Transverse colon (tissue), 4 donors: ENCODE measurements at regions of chr16 and their contacts with region 1.

Region 1: DNA sequence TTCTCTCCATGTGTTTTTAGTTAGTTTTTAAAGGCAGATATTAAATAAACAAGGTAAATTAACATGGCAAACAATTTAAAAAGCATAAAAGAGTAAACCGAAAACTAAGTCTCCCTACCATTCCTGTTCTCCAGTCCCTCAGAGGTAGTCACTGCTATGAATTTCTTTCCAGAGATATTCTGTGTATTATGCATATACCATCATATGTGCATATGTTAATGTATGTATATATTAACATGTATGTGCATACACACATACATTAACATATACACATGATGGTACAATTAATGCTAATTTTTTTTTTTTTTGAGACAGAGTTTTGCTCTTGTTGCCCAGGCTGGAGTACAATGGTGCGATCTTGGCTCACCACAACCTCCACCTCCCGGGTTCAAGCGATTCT is 32.5 kb downstream of the TANGO6 start:
- DNase-seq: no peak
- H3K4me3 ChIP-seq: no peak overlapping the region
- H3K27ac ChIP-seq: no peak overlapping the region
- H3K4me1 ChIP-seq: peaks cover 0 to 11% (median 8%) of the 10 kb centered on the region in 4 donors
- H3K27me3 ChIP-seq: no peaks in the 10 kb centered on the region
- CTCF ChIP-seq: no peak
- EP300 ChIP-seq: no peak
- POLR2A ChIP-seq: no peak

Region 2: DNA sequence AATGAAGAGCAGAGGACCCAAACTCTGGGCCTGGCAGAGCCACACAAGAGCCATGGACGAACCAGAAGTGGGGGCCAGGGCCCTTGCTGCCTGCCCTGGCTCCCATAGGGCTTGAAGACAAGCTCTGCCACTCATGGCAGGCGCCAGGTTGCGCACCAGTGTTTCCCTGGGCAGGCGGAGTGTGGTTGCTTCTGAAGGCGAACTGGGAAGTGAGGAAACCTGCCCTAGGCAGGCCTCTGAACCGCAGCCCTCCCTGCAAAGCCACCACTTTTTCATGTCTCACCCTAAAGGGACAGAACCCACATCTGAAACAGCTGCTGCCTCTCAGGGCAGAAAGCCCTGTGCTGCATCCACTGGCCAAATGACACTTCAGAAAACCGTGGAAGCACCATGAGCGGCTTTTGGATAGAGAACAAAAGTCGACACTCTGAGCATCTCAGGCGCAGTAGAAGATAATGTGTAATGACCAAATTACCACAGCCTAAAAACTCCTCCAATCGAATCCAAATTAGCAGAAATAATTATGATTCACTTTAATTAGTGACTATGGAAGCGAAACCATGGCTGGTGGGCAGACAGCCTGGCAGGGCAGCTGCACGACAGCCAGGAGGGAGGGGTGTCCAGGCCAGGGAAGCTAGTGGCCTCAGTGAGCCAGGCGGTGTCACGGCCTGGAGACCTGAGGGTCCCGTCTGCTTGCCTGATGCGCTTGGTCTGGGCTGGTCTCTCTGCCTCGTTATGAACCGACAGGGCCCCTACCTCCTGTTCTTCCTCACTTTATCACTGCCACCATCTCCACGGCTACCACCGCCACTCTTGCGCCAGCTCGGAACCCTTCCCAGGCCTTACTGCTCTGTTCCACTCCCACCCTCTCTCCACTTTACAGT is 505.9 kb before region 1 on chr16:
- in situ Hi-C with region 1: no loop called
- intact Hi-C with region 1: loop called (anchors 5 kb)
- DNase-seq: peak; percentile 68
- H3K4me3 ChIP-seq: no peak overlapping the region
- H3K27ac ChIP-seq: peak overlapping the region in 2 of 4 donors; percentile 7 to 37
- H3K4me1 ChIP-seq: no peaks in the 10 kb centered on the region
- H3K27me3 ChIP-seq: peaks cover 6% of the 10 kb centered on the region
- CTCF ChIP-seq: no peak
- EP300 ChIP-seq: no peak
- POLR2A ChIP-seq: no peak

Region 3: GRCh38 chr16:68499006-68499405 is 376.9 kb before region 1 on chr16:
- in situ Hi-C with region 1: no loop called
- intact Hi-C with region 1: no loop called
- DNase-seq: no peak
- H3K4me3 ChIP-seq: no peak overlapping the region
- H3K27ac ChIP-seq: no peak overlapping the region
- H3K4me1 ChIP-seq: no peaks in the 10 kb centered on the region
- H3K27me3 ChIP-seq: no peaks in the 10 kb centered on the region
- CTCF ChIP-seq: no peak
- EP300 ChIP-seq: no peak
- POLR2A ChIP-seq: no peak

Region 4: DNA sequence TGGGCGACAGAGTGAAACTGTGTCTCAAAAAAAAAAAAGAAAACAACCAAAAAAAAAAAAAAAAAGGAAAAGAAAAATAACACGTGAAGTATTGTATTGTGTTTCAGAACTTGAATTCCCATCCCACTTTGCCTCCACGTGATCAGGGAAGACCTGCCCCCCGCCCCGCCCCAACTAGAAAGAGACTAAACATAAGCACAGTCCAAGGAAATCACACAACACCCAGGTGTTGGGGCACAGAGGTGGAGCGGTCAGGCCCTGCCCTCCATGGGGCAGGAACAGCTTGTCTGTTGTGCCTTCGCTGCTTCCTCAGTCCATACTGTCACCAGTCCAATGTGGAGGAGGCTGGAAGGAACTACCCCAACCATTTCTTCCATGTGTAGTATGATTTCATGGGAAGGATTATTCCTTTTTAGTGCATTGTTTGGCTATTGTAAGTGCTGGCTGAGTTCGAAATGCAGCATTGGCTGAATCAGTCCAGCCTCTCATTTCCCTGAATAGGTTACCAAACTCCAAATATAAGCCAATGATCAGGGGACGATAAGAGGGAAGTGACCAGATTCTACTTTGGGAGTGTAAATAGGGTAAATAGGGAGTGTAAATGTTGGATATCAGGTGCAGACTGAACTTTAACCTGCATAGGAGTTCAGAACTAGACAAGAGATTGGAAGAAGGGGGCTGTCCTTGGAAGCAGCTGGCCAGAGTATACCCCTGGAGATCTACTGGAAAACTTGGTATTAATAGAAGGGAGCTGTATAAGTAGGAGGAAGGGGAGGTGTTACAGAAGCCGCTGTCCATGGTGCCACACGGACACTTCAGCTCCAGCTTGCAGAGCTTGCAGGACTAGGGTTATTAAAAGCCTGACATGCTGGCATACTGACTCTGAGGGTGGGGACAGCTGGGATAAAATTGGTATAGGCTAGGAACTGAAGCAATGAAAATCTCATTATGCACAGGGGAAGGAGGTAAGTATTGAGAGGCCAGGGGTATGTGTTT is 18.1 kb after region 1 on chr16:
- in situ Hi-C with region 1: no loop called
- intact Hi-C with region 1: no loop called
- DNase-seq: peak; percentile 30
- H3K4me3 ChIP-seq: no peak overlapping the region
- H3K27ac ChIP-seq: no peak overlapping the region
- H3K4me1 ChIP-seq: peaks cover 0 to 4% (median 2%) of the 10 kb centered on the region in 4 donors
- H3K27me3 ChIP-seq: no peaks in the 10 kb centered on the region
- CTCF ChIP-seq: no peak
- EP300 ChIP-seq: no peak
- POLR2A ChIP-seq: no peak